ENCODE measurements at regions of chr6 and their contacts with region 1.

Region 1: DNA sequence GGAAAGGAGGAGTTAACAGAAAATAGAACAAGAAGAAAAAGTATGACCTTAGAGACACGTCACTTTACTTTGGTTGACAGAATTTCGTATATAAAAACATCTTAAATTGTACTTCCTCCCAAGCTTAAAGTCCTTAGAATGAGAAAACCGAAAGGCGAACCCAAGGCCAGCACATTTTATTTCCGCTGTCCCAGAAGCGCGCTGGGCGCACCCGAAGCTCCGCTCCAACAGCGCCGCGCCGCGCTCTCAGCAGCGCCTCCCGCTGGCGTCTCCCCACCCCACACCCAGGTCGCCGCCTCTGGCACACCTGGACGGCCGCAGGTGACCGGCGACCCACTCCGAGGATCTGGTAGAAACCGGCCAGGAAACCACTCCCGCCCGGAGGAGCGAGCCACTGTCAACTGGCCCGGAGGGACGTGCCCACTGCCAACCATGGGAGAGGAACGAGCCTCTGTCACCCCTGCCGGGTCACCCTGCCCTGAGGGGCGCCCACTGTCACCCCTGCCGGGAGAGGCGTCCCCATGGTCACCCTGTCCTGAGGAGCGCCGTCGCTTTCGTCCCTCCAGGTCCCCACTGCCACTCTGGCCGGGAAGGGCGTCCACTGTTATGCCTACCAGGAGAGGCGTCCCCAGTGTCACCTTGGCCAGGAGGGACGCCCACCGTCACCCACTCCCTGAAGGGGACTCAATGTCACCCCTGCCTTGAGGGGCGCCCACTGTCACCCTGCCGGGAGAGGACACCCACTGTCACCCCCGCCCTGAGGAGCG is 824 bp downstream of the MPC1 start:
- DNase-seq: peak; percentile 50 to 81 (median 77)
- H3K4me3 ChIP-seq: peak overlapping the region; percentile 80 to 98 (median 90)
- H3K27ac ChIP-seq: peak overlapping the region; percentile 46 to 80
- H3K4me1 ChIP-seq: peaks cover 0 to 13% (median 12%) of the 10 kb centered on the region in 4 experiments
- H3K27me3 ChIP-seq: no peaks in the 10 kb centered on the region

Region 2: DNA sequence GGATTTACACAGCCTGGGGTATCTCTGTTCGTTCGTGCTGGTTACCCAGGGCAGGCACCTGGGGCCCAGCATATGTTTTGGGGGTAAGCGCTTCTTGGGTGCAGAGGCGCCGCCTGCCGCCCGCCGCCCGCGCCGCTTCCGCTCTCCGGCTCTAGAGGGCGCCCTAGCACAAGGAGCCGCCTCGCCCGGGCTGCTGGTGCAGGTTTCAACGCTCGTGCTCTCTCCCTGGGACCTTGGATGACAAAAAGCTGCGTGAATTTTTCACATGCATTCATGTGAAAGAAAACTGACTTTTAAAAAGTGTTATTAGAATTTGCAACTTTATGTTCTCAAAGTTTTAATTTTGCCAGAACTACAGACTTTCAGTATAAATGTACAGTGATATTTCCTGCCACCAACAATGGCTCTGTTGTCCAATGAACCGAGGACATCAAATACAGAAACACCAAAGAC is 106.2 kb before region 1 on chr6:
- CTCF ChIA-PET with region 1: interaction called, 11 read pairs
- POLR2A ChIA-PET with region 1: no interaction called
- DNase-seq: peak; percentile 61 to 79 (median 72)
- H3K4me3 ChIP-seq: no peak overlapping the region
- H3K27ac ChIP-seq: no peak overlapping the region
- H3K4me1 ChIP-seq: peaks cover 0 to 4% (median 2%) of the 10 kb centered on the region in 4 experiments
- H3K27me3 ChIP-seq: peaks cover 0 to 3% (median 0%) of the 10 kb centered on the region in 5 experiments

Region 3: GRCh38 chr6:166313255-166314070 is 68.5 kb before region 1 on chr6:
- CTCF ChIA-PET with region 1: interaction called, 40 read pairs
- POLR2A ChIA-PET with region 1: no interaction called
- DNase-seq: peak; percentile 58 to 87 (median 80)
- H3K4me3 ChIP-seq: peak overlapping the region in 1 of 7 experiments; percentile 4
- H3K27ac ChIP-seq: no peak overlapping the region
- H3K4me1 ChIP-seq: peaks cover 0 to 3% (median 2%) of the 10 kb centered on the region in 4 experiments
- H3K27me3 ChIP-seq: peaks cover 0 to 23% (median 10%) of the 10 kb centered on the region in 5 experiments

Region 4: DNA sequence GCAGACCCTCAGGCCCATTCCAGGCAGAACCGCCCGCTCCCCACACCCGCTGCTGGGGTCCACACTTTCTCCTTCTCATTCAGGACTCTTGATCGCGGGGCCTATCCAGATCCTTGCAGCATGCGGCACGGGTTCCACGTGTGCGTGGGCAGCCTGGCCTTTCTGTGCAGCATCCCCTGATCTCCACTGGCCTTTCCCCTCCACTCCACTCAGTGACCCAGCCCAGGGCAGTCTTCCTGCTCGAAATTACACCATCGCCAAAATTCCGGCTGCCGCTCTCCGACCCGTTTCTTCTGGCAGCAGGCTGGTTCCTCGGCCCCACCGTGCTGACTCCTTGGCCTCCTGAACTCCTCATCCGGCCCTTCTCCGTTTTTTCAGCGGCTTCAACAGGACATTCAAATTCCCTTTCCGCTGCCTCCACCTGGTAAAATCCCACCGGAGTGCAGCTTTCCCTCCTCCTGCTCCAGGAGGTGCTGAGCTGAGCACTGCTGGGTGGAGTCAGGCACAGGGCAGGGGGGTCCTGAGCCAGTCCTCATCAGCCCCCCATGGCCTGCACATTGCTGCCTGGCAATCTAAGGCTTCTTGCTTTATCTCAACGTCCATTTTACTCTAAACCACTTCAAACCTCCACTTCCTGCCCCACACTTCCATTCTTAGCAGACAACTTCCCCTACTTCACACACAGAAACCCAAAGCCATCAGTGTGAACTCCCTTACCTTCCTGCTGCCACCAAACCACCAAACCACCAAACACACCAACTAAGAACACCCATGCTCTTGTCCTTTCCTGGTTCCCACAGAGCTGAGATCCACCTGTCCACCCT is 48.5 kb before region 1 on chr6:
- CTCF ChIA-PET with region 1: interaction called, 31 read pairs
- POLR2A ChIA-PET with region 1: interaction called, 3 read pairs
- DNase-seq: peak; percentile 56 to 84 (median 79)
- H3K4me3 ChIP-seq: peak overlapping the region in 3 of 7 experiments; percentile 25 to 39 (median 29)
- H3K27ac ChIP-seq: no peak overlapping the region
- H3K4me1 ChIP-seq: peaks cover 11 to 33% (median 29%) of the 10 kb centered on the region in 4 experiments
- H3K27me3 ChIP-seq: peaks cover 0 to 2% (median 0%) of the 10 kb centered on the region in 5 experiments

Region 5: GRCh38 chr6:166365221-166365620 is 16.7 kb before region 1 on chr6:
- CTCF ChIA-PET with region 1: interaction called, 21 read pairs
- POLR2A ChIA-PET with region 1: no interaction called
- DNase-seq: no peak
- H3K4me3 ChIP-seq: no peak overlapping the region
- H3K27ac ChIP-seq: no peak overlapping the region
- H3K4me1 ChIP-seq: no peaks in the 10 kb centered on the region
- H3K27me3 ChIP-seq: no peaks in the 10 kb centered on the region

Region 6: GRCh38 chr6:166402582-166403277 is 20.8 kb after region 1 on chr6:
- CTCF ChIA-PET with region 1: interaction called, 28 read pairs
- POLR2A ChIA-PET with region 1: no interaction called
- DNase-seq: no peak
- H3K4me3 ChIP-seq: no peak overlapping the region
- H3K27ac ChIP-seq: no peak overlapping the region
- H3K4me1 ChIP-seq: peaks cover 0 to 2% (median 0%) of the 10 kb centered on the region in 4 experiments
- H3K27me3 ChIP-seq: no peaks in the 10 kb centered on the region

Region 7: DNA sequence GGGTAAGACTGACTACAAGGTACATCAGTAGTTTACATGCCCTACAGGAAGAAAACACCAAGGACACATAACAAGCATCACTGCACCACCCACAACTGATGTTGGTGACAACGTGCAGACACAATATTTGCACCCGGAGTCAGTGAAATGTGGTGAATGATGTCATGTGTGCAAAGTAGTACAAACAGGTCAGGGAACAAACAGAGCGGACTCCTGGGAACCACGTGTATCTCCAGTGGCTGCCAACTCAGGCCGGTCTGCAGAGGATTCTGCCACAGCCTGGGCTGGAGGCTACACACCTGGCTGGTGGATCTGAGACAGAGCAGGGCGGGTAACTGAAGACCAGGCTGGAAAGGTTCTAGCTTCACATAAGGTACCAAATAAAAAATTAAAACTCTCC is 273.3 kb after region 1 on chr6:
- CTCF ChIA-PET with region 1: no interaction called
- POLR2A ChIA-PET with region 1: no interaction called
- DNase-seq: no peak
- H3K4me3 ChIP-seq: no peak overlapping the region
- H3K27ac ChIP-seq: no peak overlapping the region
- H3K4me1 ChIP-seq: peaks cover 0 to 30% (median 28%) of the 10 kb centered on the region in 4 experiments
- H3K27me3 ChIP-seq: peaks cover 0 to 38% (median 20%) of the 10 kb centered on the region in 5 experiments

Measured in common myeloid progenitor, CD34-positive (primary cell).